ENCODE measurements at regions of chr5 and their contacts with region 1.

Region 1: DNA sequence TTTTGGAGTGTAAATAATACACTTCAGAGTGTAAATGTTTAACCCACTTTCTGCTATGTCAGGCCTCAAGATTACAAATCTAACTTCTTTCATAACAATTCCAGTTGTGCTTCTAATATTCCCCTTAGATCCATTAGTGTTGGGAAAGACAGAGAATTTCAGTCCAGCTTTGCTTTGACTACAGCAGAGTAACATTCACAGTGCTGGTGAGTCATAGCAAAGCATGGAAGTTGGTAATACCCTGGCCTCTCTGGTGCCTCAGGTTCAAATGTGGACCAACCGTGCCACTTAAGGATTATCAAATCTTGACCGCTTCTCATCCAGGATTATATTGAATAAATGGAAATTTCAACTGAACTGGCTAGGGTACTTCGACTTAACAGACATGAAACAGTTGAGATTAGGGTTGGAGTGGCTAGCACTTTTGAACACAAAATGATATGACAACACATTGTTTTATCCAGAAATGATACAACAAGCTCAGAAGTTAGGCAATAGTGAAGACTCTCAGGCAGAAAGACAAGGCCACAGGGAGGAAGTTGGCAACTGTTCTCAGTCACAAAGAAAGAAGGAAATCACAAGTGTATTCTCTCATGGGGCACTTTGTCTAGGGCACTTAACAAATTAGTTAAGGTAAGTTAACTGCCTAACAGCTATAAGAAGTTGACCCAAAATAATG is 24.4 kb upstream of the RASA1 start:
- DNase-seq: no peak
- ATAC-seq: no peak
- H3K4me3 ChIP-seq: no peak overlapping the region
- H3K4me3 Mint-ChIP-seq: no peak overlapping the region
- H3K27ac ChIP-seq: no peak overlapping the region
- H3K27ac Mint-ChIP-seq: no peak overlapping the region
- H3K4me1 ChIP-seq: no peaks in the 10 kb centered on the region
- H3K4me1 Mint-ChIP-seq: no peaks in the 10 kb centered on the region
- H3K27me3 ChIP-seq: no peaks in the 10 kb centered on the region
- H3K27me3 Mint-ChIP-seq: no peaks in the 10 kb centered on the region
- CTCF ChIP-seq: no peak

Region 2: DNA sequence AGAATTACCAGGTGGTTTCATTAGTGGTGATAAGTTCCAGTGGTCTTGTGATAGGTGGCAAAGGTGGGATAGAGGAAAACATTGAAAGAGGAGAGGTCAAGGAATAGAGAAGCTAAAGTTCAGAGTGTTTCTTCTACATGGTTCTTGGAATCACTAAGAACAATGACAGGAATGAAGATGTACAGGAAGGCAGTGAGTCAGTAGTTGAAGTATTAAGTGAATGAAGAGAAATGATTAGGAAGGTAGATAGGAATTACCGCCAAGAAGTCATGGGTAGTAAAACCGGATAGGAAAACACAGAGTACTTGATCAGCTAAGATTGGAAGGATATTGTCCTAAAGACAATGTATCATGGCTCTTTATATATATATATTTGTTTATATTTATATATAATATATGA is 13.5 kb before region 1 on chr5:
- CTCF ChIA-PET with region 1: no interaction called
- POLR2A ChIA-PET with region 1: no interaction called
- intact Hi-C with region 1: loop called in 1 of 2 experiments (anchors 2 kb)
- DNase-seq: no peak
- ATAC-seq: no peak
- H3K4me3 ChIP-seq: no peak overlapping the region
- H3K4me3 Mint-ChIP-seq: no peak overlapping the region
- H3K27ac ChIP-seq: no peak overlapping the region
- H3K27ac Mint-ChIP-seq: no peak overlapping the region
- H3K4me1 ChIP-seq: no peaks in the 10 kb centered on the region
- H3K4me1 Mint-ChIP-seq: peaks cover 4% of the 10 kb centered on the region
- H3K27me3 ChIP-seq: no peaks in the 10 kb centered on the region
- H3K27me3 Mint-ChIP-seq: no peaks in the 10 kb centered on the region
- CTCF ChIP-seq: no peak

Region 3: GRCh38 chr5:88085462-88085861 is 842.2 kb after region 1 on chr5:
- CTCF ChIA-PET with region 1: no interaction called
- POLR2A ChIA-PET with region 1: no interaction called
- intact Hi-C with region 1: no loop called
- DNase-seq: no peak
- ATAC-seq: no peak
- H3K4me3 ChIP-seq: no peak overlapping the region
- H3K4me3 Mint-ChIP-seq: no peak overlapping the region
- H3K27ac ChIP-seq: no peak overlapping the region
- H3K27ac Mint-ChIP-seq: no peak overlapping the region
- H3K4me1 ChIP-seq: no peaks in the 10 kb centered on the region
- H3K4me1 Mint-ChIP-seq: no peaks in the 10 kb centered on the region
- H3K27me3 ChIP-seq: no peaks in the 10 kb centered on the region
- H3K27me3 Mint-ChIP-seq: peaks cover 13% of the 10 kb centered on the region
- CTCF ChIP-seq: no peak